ENCODE measurements at regions of chrX and their contacts with region 1.

Region 1: GRCh38 chrX:1009771-1010170 is 202.7 kb downstream of the CRLF2 start:
- DNase-seq: no peak
- H3K4me3 ChIP-seq: no peak overlapping the region
- H3K27ac ChIP-seq: peak overlapping the region; percentile 96
- H3K4me1 ChIP-seq: peaks cover 43% of the 10 kb centered on the region
- CTCF ChIP-seq: no peak

Region 2: GRCh38 chrX:843306-843705 is 166.5 kb before region 1 on chrX:
- CTCF ChIA-PET with region 1: no interaction called
- POLR2A ChIA-PET with region 1: no interaction called
- intact Hi-C with region 1: no loop called
- DNase-seq: no peak
- H3K4me3 ChIP-seq: no peak overlapping the region
- H3K27ac ChIP-seq: no peak overlapping the region
- H3K4me1 ChIP-seq: no peaks in the 10 kb centered on the region
- CTCF ChIP-seq: no peak

Region 3: GRCh38 chrX:1041091-1041490 is 31.3 kb after region 1 on chrX:
- CTCF ChIA-PET with region 1: no interaction called
- POLR2A ChIA-PET with region 1: no interaction called
- intact Hi-C with region 1: no loop called
- DNase-seq: no peak
- H3K4me3 ChIP-seq: no peak overlapping the region
- H3K27ac ChIP-seq: no peak overlapping the region
- H3K4me1 ChIP-seq: no peaks in the 10 kb centered on the region
- CTCF ChIP-seq: no peak

Region 4: DNA sequence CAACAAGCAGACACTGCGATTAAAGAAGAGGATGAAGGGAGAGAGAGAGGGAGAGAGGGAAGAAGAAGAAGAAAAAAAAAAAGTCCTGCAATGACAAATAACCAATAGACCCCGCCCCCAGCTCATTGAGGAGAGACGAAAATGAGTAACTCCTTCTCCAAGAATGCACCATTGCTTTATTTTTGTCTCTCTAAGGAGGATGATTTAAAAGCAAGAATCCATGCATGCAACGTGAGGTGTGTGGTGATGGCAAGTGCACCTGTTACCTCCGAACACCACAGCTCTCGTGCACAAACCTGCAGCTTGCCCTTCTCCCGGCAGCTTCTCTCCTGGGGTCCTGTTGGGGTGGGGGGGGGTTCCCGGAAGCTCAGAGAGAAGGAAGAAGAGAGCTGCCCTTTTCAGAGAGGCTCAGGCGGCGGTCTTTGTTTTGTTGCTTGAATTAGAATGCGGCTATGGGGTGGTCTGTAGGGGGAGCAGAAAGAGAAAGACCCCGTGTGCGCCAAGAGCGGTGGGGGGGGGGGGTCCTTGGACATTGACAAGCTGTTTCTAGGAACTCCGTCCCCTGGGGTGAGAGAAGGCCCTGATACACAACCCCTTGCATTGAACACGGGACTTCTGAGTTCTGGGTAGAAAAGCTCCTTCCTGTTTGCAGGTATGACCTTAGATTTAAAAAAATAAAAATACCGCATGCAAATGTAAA is 102.0 kb after region 1 on chrX:
- CTCF ChIA-PET with region 1: no interaction called
- POLR2A ChIA-PET with region 1: no interaction called
- intact Hi-C with region 1: loop called (anchors 2 kb)
- DNase-seq: peak; percentile 26
- H3K4me3 ChIP-seq: peak overlapping the region; percentile 32
- H3K27ac ChIP-seq: no peak overlapping the region
- H3K4me1 ChIP-seq: peaks cover 26% of the 10 kb centered on the region
- CTCF ChIP-seq: no peak

Measured in OCI-LY7 (cell line).